ENCODE measurements at regions of chr12 and their contacts with region 1.

Region 1: DNA sequence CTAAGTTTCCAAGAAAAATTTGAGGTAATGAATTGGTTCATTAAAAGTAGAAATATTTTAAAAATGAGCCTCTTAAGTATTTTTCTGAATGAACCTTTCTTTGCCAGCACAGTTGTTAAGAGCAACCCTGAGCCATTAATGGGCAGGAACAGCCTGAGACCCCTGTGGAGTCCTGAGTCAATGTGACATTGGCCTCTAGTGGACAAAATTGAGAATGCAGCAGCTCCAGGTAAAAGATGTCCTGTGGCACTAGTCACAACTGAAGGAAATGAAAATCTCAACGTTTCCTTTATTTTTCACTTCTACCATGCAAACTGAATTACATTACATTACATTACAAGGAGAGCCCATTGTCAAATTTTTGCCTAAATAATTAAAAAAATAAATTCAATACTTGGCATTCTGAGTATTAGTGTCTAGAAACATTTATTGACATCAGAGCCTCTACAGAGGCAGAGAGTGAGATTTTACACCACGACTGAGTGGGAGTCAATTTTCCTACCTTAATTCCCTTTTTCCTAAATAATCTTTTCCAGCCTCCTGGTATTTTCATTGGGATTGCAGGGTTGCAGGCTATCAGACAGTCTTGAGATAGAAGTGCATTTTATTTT is 135.7 kb downstream of the PPM1H start:
- DNase-seq: peak; percentile 38
- ATAC-seq: peak; percentile 81 to 82

Region 2: DNA sequence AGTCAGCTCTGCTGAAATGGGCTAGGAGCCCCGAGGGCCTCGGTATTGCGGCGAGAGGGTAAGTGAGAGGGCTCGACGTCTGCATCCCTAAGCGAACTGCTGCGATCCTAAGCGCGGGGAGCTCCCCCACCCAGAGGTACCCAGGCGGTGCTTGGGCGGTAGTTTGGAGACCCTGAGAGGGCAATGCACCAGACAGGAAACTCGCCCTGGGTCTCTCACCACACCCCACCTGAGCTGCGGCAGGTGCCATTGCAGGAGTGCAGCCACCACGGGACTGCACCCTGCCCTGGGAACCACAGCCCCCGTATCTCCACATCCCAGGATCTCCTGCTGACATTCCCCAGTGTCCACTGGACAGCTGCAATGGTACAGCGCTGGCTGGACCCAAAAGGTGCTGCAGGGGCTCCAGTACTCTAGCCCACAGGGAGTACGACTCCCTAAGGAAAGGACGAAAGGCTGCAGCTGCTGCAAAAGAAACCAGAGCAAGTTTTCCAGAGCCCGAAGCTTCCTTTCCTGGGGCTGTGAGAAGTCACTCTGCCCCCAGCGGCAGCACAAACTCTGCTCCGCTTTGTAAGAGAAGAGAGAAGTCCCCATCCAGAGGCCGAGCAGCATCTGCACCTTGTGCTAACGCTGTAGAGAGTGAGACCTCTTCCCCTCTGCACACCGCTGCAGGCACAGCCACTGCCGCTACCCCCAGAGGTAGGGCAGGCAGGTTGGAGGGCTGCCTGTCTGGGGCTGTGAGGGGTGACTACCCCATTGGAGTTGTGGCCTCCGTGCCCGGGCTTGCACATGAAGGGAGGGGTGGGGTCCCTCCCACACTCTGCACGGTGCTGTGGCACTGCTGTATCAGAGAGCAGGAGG is 363.7 kb before region 1 on chr12:
- intact Hi-C with region 1: loop called (anchors 5 to 10 kb)
- DNase-seq: peak; percentile 47
- ATAC-seq: peak; percentile 72 to 82